Activated CD4-positive, alpha-beta memory T cell treated with anti-CD3 and anti-CD28 coated beads for 36 hours (primary cell): ENCODE measurements at regions of chr4 and their contacts with region 1.

Region 1: GRCh38 chr4:158253350-158253980 is 43.2 kb downstream of the TMEM144 start:
- DNase-seq: peak; percentile 49
- H3K4me3 Mint-ChIP-seq: no peak overlapping the region
- H3K27ac Mint-ChIP-seq: no peak overlapping the region
- H3K4me1 Mint-ChIP-seq: peaks cover 6% of the 10 kb centered on the region
- H3K27me3 Mint-ChIP-seq: peaks cover 9% of the 10 kb centered on the region

Region 2: DNA sequence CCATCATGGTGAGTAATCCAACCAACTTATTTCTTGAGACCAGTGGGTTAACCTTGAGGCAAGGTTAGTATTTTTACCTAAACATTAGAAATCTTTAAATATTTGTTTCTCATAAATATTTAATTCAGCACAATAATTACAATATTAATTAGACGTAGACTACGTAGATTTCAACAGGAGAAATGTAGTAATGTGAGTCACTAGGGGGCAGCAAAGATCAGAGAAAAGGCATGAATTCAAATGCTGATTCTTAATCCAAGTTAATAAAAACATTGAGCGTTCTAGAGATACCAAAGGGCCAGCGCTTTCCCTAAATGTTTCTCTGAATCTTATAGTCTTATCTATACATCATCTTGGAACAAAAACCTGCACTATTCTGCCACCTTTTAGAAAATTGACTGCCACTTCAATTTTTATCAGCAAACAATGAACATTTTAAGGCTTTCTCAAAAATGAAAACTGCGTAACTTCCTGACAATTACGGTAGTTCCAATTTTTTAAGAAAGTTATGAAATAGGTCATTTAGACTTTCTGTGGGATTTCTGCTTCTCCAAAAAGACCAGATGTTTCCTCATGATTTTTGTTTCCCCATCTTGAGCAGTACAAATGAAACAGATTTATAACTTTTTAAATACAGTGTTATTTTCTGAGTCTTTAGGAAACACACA is 261.3 kb before region 1 on chr4:
- CTCF ChIA-PET with region 1: interaction called, 5 read pairs
- POLR2A ChIA-PET with region 1: no interaction called
- intact Hi-C with region 1: loop called (anchors 1 kb)
- DNase-seq: no peak
- H3K4me3 Mint-ChIP-seq: no peak overlapping the region
- H3K27ac Mint-ChIP-seq: no peak overlapping the region
- H3K4me1 Mint-ChIP-seq: no peaks in the 10 kb centered on the region
- H3K27me3 Mint-ChIP-seq: no peaks in the 10 kb centered on the region

Region 3: GRCh38 chr4:158277558-158277957 is 24.1 kb after region 1 on chr4:
- CTCF ChIA-PET with region 1: interaction called, 10 read pairs
- POLR2A ChIA-PET with region 1: no interaction called
- intact Hi-C with region 1: no loop called
- DNase-seq: no peak
- H3K4me3 Mint-ChIP-seq: no peak overlapping the region
- H3K27ac Mint-ChIP-seq: no peak overlapping the region
- H3K4me1 Mint-ChIP-seq: no peaks in the 10 kb centered on the region
- H3K27me3 Mint-ChIP-seq: peaks cover 2% of the 10 kb centered on the region

Region 4: GRCh38 chr4:158347556-158347955 is 94.1 kb after region 1 on chr4:
- CTCF ChIA-PET with region 1: no interaction called
- POLR2A ChIA-PET with region 1: no interaction called
- intact Hi-C with region 1: no loop called
- DNase-seq: no peak
- H3K4me3 Mint-ChIP-seq: no peak overlapping the region
- H3K27ac Mint-ChIP-seq: no peak overlapping the region
- H3K4me1 Mint-ChIP-seq: no peaks in the 10 kb centered on the region
- H3K27me3 Mint-ChIP-seq: no peaks in the 10 kb centered on the region

Region 5: DNA sequence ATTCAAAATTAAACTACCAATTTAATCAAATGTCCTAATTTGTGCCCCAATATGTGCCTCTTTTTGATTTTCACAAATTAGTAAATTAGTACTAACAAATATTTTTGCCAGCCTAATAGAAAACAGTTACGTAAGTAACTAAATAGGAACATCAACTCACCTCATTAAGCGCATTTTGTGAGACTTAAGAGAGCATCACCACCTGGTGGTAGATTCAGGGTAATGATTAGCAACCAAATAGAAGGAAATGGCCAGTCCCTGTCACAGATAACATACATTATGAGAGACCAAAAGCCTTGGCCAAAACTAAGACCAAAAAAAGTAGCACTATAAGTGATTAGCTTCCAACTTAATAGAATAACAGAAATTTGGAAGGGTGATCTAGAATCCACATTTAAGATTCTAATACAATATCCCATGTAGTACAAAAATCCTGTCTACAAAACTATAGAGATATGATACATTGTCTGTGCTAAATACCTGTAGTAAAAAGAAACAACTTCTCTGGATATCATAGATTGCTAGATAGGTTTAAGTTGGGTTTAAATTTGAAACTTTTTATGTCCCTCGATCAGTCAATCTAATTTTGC is 371.5 kb after region 1 on chr4:
- CTCF ChIA-PET with region 1: interaction called, 3 read pairs
- POLR2A ChIA-PET with region 1: no interaction called
- intact Hi-C with region 1: loop called (anchors 1 kb)
- DNase-seq: no peak
- H3K4me3 Mint-ChIP-seq: no peak overlapping the region
- H3K27ac Mint-ChIP-seq: no peak overlapping the region
- H3K4me1 Mint-ChIP-seq: no peaks in the 10 kb centered on the region
- H3K27me3 Mint-ChIP-seq: peaks cover 11% of the 10 kb centered on the region

Region 6: DNA sequence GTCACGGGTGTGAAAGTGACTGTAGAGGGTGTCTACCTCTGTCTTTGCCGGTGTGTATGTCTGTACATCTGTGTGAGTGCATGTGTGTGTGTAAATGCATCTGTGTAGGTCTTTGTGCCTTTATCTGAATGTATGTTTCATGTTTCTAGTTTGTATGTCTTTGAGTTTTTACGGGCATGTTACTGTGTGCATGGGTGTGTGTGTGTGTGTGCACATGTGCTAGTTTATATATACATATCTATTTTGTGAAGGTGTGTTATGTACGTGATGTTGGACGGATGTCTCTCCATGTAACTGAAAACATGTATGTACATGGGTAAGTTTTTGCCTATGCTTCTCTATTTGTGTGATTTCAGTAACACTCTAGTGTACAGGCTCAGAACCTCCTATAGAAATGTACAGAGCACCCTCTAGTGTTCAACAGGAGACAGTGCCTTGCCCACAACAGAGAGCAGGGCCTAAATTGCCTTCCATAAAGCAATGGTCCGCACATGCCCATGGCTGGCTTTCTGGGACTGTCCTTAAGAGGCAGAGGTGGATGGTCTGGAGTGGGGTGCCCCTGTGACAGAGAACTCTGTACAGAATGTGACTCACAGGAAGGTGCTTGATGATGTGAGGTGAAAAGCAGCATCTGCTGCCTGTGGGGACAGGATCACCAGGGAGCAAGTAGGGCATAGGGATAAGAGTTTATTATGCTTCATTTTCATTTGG is 1193.0 kb after region 1 on chr4:
- CTCF ChIA-PET with region 1: no interaction called
- POLR2A ChIA-PET with region 1: no interaction called
- intact Hi-C with region 1: loop called (anchors 1 kb)
- DNase-seq: peak; percentile 28
- H3K4me3 Mint-ChIP-seq: no peak overlapping the region
- H3K27ac Mint-ChIP-seq: no peak overlapping the region
- H3K4me1 Mint-ChIP-seq: no peaks in the 10 kb centered on the region
- H3K27me3 Mint-ChIP-seq: peaks cover 9% of the 10 kb centered on the region